Transverse colon (tissue), 4 donors: ENCODE measurements at regions of chr9 and their contacts with region 1.

Region 1: DNA sequence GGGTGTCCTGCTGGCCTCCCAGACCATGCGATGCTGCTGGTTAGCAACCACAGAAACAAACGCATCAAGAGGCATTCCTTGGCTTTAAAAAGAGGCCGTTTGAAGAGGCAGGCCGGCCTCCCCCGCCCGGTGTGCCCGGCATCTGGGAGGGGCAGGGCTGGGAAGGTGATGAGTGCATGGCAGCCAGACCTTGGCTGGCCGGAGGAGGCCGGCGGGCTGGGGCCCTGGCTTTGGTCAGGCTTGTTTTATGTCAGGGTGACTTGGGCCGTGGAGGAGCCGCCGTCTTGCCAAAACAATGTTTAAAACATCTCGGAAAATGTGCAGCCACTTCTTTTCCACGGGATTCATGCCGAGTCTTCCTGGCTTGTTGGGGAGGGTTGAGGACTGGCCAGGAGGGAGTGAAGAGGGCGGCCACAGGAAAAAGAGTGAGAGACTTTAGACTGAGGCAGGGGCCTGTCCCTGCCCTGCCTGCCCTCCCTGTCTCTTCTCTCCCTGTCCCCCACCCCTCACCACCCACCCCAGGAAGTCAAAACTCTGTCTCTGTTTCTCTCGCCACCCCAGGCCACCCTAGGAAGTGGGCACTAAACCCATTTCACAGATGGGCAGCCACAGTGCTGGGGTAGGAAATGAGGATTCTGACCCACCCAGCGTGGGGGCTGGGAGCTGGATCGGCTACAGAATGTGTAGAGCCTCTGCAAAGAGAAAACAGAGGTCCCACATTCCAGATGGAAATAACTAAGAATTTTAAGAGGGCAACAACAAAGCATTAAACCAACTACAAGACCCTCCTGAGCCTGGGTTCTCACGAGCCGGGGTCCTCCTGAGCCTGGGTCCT is 143.0 kb downstream of the RXRA start:
- DNase-seq: peak; percentile 22
- H3K4me3 ChIP-seq: no peak overlapping the region
- H3K27ac ChIP-seq: peak overlapping the region; percentile 59 to 77 (median 70)
- H3K4me1 ChIP-seq: peaks cover 0 to 18% (median 7%) of the 10 kb centered on the region in 4 donors
- H3K27me3 ChIP-seq: no peaks in the 10 kb centered on the region
- CTCF ChIP-seq: no peak
- EP300 ChIP-seq: no peak
- POLR2A ChIP-seq: no peak

Region 2: DNA sequence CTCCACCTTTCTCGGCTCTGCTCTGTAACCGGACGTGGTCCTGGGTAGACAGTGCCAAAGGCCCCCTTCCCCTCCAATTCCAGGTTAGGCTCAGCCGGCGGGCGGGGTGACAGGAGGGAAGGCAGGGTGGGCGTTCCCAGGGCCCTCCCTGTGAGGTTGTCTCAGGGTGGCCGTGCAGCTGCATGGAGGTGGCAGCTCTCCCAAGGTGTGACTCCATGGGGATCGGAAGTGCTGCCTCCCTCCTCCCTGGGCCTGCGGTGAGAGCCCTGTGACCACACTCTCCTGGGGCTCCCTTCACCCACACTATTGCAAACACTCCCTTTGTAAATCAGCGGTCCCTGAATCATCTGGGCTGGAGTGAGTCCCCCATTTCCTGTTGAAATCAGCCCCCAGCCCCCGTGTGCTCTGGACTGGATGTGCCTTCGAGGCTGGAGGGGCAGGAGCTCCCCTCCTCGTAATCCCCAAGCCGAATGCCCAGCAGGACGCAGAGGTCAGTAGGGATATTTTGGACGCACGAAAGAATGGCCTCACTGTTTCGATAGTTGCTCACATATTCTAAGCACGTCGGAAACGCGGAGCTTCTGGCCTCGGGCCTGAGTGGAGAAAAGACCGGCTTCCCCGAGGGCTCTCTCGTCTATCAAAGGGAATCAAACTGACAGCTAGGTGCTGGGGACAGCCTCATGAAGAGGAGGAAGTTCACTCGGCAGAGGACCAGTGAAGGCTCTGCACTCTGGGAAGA is 64.8 kb after region 1 on chr9:
- in situ Hi-C with region 1: no loop called
- intact Hi-C with region 1: loop called (anchors 2 kb)
- DNase-seq: no peak
- H3K4me3 ChIP-seq: no peak overlapping the region
- H3K27ac ChIP-seq: peak overlapping the region; percentile 37 to 45 (median 39)
- H3K4me1 ChIP-seq: peaks cover 0 to 23% (median 5%) of the 10 kb centered on the region in 4 donors
- H3K27me3 ChIP-seq: no peaks in the 10 kb centered on the region
- CTCF ChIP-seq: no peak
- EP300 ChIP-seq: no peak
- POLR2A ChIP-seq: no peak